A673 (cell line): ENCODE measurements at regions of chr1 and their contacts with region 1.

Region 1: DNA sequence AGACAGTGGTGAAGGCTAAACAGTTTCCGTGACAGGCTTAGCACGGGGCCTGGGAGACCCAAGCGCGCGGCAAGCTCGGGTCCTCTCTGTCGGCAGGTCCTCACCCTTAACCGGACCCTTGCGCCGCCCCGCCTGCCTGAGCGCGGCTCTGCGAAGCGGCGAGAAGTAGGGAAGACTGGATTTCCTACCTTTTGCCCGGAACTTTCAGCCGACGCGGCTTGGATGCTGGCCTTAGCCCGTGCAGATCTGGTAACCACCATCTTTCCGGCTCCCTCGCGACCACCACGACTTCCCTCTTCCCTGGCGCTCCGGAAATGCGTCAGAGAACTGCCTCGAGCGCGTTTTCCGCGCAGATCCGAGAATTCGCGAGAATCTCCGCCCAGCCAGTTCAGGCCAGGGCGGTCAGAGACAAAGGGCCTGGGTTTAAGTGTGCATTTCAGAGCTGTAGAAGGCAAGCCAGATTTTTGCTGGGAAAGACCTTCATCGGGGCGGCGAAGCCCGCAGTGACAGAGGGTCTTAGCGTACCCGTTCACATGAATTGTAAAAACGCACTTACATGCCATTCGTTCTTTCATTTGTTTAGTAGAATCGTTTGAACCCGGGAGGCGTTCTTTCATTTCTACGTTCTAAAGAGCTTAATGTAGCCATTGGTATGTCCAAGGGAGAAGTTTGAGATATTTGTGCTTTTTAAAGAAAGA is at the start of gene DNTTIP2:
- DNase-seq: peak; percentile 98
- H3K4me3 ChIP-seq: peak within 1 kb of the TSS; percentile 89
- H3K27ac ChIP-seq: peak within 1 kb of the TSS; percentile 97
- H3K4me1 ChIP-seq: peaks cover 20% of the 10 kb centered on the region
- H3K27me3 ChIP-seq: no peaks in the 10 kb centered on the region
- CTCF ChIP-seq: no peak
- total RNA-seq, gene DNTTIP2: 78.4 and 102 TPM in 2 replicates

Region 2: DNA sequence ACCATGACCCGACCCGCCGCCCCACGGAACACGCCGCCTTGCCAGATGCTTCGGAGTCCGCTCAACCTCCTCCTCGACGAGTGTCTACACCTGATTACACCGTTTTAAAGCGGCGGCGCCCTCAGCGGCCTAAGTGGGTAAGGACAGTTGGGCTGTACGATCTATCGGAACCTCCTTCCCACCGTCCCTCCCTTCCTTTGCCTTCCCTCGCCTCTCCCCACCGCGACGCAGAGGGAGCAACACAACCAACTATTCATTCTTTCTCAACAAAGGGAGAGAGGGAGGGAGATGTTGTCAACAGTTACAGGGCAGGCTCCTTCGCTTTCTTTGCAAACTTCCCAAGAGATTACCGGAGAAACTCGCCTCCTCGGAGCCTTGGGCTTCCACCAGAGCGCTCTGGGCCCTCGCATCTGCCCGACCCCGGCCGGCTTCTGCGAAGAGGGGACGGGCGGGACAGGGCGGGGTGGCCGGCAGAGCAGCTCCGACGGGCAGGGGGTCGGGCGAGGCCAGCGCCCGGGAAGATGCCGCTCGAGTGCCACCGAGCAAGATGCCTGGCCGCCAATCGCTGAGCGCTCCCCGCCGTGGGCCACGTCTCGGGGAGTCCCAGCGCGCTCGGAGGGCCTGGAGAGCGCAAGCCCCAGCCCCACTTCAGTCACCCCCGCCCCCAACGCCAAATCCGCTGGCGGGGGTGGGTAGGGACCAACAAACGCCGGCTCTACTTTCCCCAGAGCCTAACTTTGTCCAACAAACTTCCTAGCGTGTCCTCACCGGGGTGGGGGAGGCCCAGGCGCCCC is 198.1 kb before region 1 on chr1:
- CTCF ChIA-PET with region 1: no interaction called
- POLR2A ChIA-PET with region 1: interaction called, 18 read pairs
- intact Hi-C with region 1: no loop called
- DNase-seq: peak; percentile 45
- H3K4me3 ChIP-seq: peak overlapping the region; percentile 57
- H3K27ac ChIP-seq: no peak overlapping the region
- H3K4me1 ChIP-seq: no peaks in the 10 kb centered on the region
- H3K27me3 ChIP-seq: peaks cover 25% of the 10 kb centered on the region
- CTCF ChIP-seq: peak; percentile 39; the same call in 1 of the 2 replicates

Region 3: DNA sequence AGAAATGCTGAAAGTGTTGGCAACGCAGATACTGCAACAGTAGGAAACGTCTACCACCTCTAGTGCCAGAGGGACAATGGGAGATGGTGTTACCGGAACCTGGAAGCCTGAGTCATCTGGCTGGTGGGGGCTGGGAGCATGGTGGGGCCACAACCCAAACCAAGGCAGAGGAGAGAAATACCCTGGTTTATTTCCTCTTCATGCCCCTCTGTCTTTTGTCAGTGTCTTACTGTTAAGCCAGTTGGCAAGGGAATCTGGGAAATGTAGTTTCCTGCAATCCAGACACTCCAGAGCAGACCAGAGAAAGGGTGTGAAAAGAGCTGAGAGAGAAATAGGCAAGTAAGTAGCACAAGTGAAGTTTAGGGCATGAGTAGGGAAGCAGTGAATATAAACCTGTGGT is 14.9 kb before region 1 on chr1:
- CTCF ChIA-PET with region 1: no interaction called
- POLR2A ChIA-PET with region 1: no interaction called
- intact Hi-C with region 1: no loop called
- DNase-seq: no peak
- H3K4me3 ChIP-seq: no peak overlapping the region
- H3K27ac ChIP-seq: no peak overlapping the region
- H3K4me1 ChIP-seq: no peaks in the 10 kb centered on the region
- H3K27me3 ChIP-seq: no peaks in the 10 kb centered on the region
- CTCF ChIP-seq: no peak

Region 4: GRCh38 chr1:93909146-93910050 is 30.4 kb after region 1 on chr1 and contains the start of gene GCLM:
- CTCF ChIA-PET with region 1: no interaction called
- POLR2A ChIA-PET with region 1: no interaction called
- intact Hi-C with region 1: loop called (anchors 2 kb)
- DNase-seq: peak; percentile 94
- H3K4me3 ChIP-seq: peak within 1 kb of the TSS; percentile 89
- H3K27ac ChIP-seq: peak within 1 kb of the TSS; percentile 82
- H3K4me1 ChIP-seq: peaks cover 37% of the 10 kb centered on the region
- H3K27me3 ChIP-seq: no peaks in the 10 kb centered on the region
- CTCF ChIP-seq: peak; percentile 86
- total RNA-seq, gene GCLM: 27.5 and 34.4 TPM in 2 replicates

Region 5: GRCh38 chr1:94105957-94106529 is 227.0 kb after region 1 on chr1:
- CTCF ChIA-PET with region 1: no interaction called
- POLR2A ChIA-PET with region 1: no interaction called
- intact Hi-C with region 1: no loop called
- DNase-seq: peak; percentile 52
- H3K4me3 ChIP-seq: no peak overlapping the region
- H3K27ac ChIP-seq: no peak overlapping the region
- H3K4me1 ChIP-seq: no peaks in the 10 kb centered on the region
- H3K27me3 ChIP-seq: no peaks in the 10 kb centered on the region
- CTCF ChIP-seq: no peak